Natural killer cell (primary cell): ENCODE measurements at regions of chr15 and their contacts with region 1.

Region 1: GRCh38 chr15:47484059-47484458 is 233.2 kb upstream of the SEMA6D start:
- DNase-seq: no peak
- ATAC-seq: no peak
- H3K4me3 ChIP-seq: no peak overlapping the region
- H3K4me3 Mint-ChIP-seq: no peak overlapping the region
- H3K27ac ChIP-seq: no peak overlapping the region
- H3K27ac Mint-ChIP-seq: no peak overlapping the region
- H3K4me1 ChIP-seq: no peaks in the 10 kb centered on the region
- H3K4me1 Mint-ChIP-seq: no peaks in the 10 kb centered on the region
- H3K27me3 ChIP-seq: no peaks in the 10 kb centered on the region
- H3K27me3 Mint-ChIP-seq: peaks cover 0 to 8% of the 10 kb centered on the region in 2 donors
- CTCF ChIP-seq: no peak

Region 2: DNA sequence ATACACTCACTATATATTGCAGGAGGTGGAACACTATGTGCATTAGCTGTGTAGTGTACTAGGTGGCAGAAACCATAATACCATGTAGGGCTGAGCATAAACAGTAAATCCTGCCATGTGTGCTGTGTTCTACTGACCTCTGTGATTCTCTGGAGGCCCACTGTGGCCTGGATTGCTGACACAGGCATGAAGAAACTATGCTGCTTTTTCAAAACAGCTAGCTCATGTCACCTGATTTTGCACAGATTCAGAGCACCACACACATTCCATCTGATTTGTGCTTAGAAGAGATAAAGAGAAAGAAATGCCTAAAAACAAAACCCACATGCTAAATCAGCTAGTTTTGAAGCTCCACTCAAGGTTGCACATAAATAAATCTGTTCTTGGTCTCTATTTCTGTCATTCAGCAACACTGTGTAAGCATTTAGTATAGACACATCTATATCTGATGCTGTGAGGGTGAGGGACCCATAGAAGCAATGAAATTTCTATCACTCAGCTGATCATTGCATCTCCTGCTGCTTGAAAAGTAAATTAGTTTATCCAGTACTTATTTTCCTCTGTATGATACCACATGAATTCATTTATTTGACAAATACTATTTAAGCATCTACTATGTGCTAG is 774.5 kb before region 1 on chr15:
- intact Hi-C with region 1: no loop called
- DNase-seq: no peak
- ATAC-seq: no peak
- H3K4me3 ChIP-seq: no peak overlapping the region
- H3K4me3 Mint-ChIP-seq: no peak overlapping the region
- H3K27ac ChIP-seq: no peak overlapping the region
- H3K27ac Mint-ChIP-seq: no peak overlapping the region
- H3K4me1 ChIP-seq: no peaks in the 10 kb centered on the region
- H3K4me1 Mint-ChIP-seq: no peaks in the 10 kb centered on the region
- H3K27me3 ChIP-seq: no peaks in the 10 kb centered on the region
- H3K27me3 Mint-ChIP-seq: no peaks in the 10 kb centered on the region
- CTCF ChIP-seq: no peak

Region 3: DNA sequence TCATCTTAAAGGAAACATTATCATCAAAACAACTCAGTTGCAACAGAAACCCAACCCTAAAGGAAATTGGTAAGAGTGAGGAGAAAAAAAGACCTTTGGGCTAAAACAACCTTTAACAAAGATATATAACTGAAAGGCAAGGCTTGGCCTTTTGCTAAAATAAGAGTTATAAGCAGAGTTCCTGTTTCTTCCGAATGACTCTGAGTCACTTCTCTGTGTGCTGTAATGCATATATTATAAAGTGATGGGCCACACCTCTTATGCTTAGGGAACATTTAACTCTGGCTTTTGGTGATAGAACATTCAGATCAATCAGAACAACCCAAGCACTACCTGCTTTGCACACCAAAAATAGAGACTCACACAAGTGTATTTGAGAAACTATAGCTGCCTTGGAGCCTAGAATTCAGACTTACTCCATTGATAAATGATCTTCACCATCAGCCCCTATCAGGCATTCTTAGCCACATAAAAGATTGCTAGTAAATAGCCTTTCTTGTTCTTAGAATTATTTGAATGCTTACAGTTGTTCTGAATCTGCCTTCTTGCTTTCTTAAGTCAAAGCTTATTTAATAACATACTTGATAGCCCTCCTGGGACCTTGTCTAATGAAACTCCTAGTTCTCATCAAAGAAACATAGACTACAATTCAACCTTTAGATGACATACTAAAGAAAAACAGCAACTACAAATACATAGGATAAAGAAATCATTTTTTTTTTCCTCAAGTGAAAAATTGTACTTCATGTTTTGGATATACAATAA is 61.0 kb before region 1 on chr15:
- intact Hi-C with region 1: loop called (anchors 10 kb)
- DNase-seq: no peak
- ATAC-seq: no peak
- H3K4me3 ChIP-seq: no peak overlapping the region
- H3K4me3 Mint-ChIP-seq: no peak overlapping the region
- H3K27ac ChIP-seq: no peak overlapping the region
- H3K27ac Mint-ChIP-seq: no peak overlapping the region
- H3K4me1 ChIP-seq: no peaks in the 10 kb centered on the region
- H3K4me1 Mint-ChIP-seq: no peaks in the 10 kb centered on the region
- H3K27me3 ChIP-seq: no peaks in the 10 kb centered on the region
- H3K27me3 Mint-ChIP-seq: peaks cover 4 to 6% of the 10 kb centered on the region in 2 donors
- CTCF ChIP-seq: no peak